ENCODE measurements at regions of chr9 and their contacts with region 1.

Region 1: DNA sequence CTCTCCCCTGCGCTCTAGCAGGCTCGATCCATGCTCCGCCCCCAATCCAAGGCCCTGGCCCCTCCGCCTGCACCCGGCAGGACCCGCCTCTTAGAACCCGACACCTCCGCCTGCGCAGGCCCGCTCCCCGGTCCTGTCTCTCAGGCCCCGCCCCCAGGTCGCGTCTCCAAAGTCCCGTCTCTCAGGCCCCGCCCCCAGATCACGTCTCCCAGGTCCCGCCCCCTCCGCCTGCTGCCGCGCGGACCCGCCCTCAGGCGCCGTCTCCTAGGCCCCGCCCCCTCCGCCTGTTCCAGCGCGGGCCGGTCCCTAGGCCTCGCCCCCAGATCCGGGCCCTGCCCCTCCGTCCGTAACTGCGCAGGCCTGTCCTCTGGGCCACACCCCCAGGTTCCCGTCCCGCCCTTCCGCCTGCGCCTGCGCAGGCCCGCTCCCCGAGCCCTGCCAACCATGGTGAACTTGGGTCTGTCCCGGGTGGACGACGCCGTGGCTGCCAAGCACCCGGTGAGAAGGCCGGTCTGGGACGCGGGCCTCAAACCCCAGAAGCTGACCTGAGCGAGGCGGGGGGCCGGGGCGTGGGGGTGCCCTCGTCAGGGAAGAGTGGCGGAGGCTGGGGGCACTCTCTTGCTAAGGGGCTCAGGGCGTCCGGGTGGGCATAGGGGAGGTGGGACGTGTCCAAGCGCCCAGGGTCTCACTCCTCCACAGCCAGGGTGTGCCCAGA is at the start of gene TMEM141:
- DNase-seq: peak; percentile 99 to 100 (median 99)
- H3K4me3 ChIP-seq: peak within 1 kb of the TSS; percentile 61 to 86
- H3K4me3 Mint-ChIP-seq: peak within 1 kb of the TSS; percentile 81 to 88 (median 85)
- H3K27ac ChIP-seq: peak within 1 kb of the TSS; percentile 93
- H3K27ac Mint-ChIP-seq: peak within 1 kb of the TSS; percentile 91 to 98 (median 95)
- H3K4me1 ChIP-seq: peaks cover 31% of the 10 kb centered on the region
- H3K4me1 Mint-ChIP-seq: peaks cover 8 to 42% (median 24%) of the 10 kb centered on the region in 4 donors
- H3K27me3 ChIP-seq: no peaks in the 10 kb centered on the region
- H3K27me3 Mint-ChIP-seq: no peaks in the 10 kb centered on the region
- total RNA-seq, gene TMEM141: 51.1 to 53.4 TPM

Region 2: DNA sequence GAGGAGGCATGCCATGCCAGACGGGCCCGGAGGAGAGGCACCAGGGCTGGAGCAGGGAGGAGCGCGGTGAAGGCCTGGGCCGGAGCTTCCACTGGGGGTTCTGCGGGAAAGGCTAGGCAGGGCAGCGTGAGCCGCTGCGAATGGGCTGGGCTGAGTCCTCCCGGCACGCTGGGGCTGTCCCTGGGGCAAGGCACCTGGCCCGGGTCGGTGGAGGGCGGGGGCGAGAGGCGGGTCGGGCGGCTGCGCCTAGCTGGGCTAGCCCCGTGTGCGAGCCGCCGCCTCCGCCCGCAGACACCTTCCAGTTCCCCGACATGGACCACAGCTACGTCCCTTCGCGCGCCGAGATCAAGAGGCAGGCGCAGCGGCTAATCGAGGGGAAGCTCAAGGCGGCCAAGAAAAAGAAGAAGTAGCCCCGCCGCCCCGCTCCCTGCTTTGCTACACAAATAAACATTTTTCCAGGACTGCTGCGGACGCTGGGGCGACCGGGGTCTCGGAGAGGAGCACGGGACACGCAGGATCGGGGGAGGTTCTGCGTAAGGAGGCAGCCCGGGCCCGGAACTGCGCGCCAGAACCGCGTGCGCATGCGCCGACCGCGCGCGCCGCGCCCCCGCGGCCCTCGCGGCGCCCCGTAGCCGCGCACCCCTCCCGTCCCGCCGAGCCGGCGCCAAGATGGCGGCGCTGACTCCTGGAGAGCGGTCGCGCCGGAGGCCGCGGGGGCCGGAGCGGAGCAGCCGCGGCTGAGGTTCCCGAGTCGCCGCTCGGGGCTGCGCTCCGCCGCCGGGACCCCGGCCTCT is 16.4 kb after region 1 on chr9 and contains the start of gene RABL6:
- CTCF ChIA-PET with region 1: interaction called, 16 read pairs
- POLR2A ChIA-PET with region 1: interaction called, 38 read pairs
- intact Hi-C with region 1: loop called (anchors 2 kb)
- DNase-seq: peak; percentile 78 to 90 (median 86)
- H3K4me3 ChIP-seq: peak within 1 kb of the TSS; percentile 61 to 74
- H3K4me3 Mint-ChIP-seq: peak within 1 kb of the TSS; percentile 87 to 93 (median 90)
- H3K27ac ChIP-seq: peak within 1 kb of the TSS; percentile 83
- H3K27ac Mint-ChIP-seq: peak within 1 kb of the TSS; percentile 91 to 96 (median 94)
- H3K4me1 ChIP-seq: peaks cover 40% of the 10 kb centered on the region
- H3K4me1 Mint-ChIP-seq: peaks cover 11 to 45% (median 30%) of the 10 kb centered on the region in 4 donors
- H3K27me3 ChIP-seq: no peaks in the 10 kb centered on the region
- H3K27me3 Mint-ChIP-seq: no peaks in the 10 kb centered on the region
- total RNA-seq, gene RABL6: 65.1 to 70.9 TPM

Region 3: GRCh38 chr9:136885950-136886578 is 95.0 kb after region 1 on chr9 and contains the start of gene TRAF2:
- CTCF ChIA-PET with region 1: interaction called, 3 read pairs
- POLR2A ChIA-PET with region 1: interaction called, 6 read pairs
- intact Hi-C with region 1: loop called (anchors 5 kb)
- DNase-seq: peak; percentile 97
- H3K4me3 ChIP-seq: peak within 1 kb of the TSS; percentile 36 to 82
- H3K4me3 Mint-ChIP-seq: peak within 1 kb of the TSS; percentile 84 to 92 (median 88)
- H3K27ac ChIP-seq: peak within 1 kb of the TSS; percentile 98
- H3K27ac Mint-ChIP-seq: peak within 1 kb of the TSS; percentile 92 to 97 (median 94)
- H3K4me1 ChIP-seq: peaks cover 54% of the 10 kb centered on the region
- H3K4me1 Mint-ChIP-seq: peaks cover 16 to 57% (median 32%) of the 10 kb centered on the region in 4 donors
- H3K27me3 ChIP-seq: no peaks in the 10 kb centered on the region
- H3K27me3 Mint-ChIP-seq: no peaks in the 10 kb centered on the region
- total RNA-seq, gene TRAF2: 40.2 to 43.2 TPM

Region 4: DNA sequence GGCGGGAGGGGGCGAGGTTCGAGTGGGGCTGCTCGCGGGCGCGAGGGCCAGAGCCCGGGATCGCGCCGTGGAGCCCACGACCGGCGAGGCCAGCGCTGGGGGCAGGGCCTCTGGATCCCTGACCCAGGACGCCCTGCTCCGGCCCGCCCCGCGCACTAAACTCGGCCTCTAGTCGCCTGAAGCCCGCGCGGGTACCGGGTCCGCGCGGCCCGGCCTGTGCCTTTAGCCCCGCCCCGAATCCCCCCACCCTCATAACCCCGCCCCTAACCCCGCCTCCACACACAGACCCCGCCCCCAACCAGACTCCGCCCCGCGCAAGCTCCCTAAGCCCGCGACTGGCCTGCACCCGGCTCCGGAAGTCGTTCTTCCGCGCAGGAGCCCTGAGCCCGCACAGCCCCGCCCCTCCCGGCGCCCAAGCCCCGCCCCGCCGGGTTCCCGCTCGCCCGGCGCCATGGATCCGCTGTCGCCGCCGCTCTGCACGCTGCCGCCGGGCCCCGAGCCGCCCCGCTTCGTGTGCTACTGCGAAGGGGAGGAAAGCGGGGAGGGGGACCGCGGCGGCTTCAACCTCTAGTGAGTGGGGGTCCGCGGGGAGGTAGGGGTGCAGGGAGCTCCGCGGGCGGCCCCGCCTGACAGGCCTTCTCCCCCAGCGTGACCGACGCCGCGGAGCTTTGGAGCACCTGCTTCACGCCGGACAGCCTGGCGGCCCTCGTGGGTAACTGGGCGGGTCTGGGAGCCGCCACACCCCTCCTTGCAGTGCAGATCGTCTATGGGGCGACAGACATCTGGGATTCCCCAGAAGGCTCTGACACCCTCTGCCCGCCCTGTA is 201.1 kb after region 1 on chr9 and contains the start of gene PAXX:
- CTCF ChIA-PET with region 1: interaction called, 3 read pairs
- POLR2A ChIA-PET with region 1: interaction called, 3 read pairs
- intact Hi-C with region 1: loop called (anchors 1 kb)
- DNase-seq: peak; percentile 92 to 93 (median 93)
- H3K4me3 ChIP-seq: peak within 1 kb of the TSS; percentile 86 to 90
- H3K4me3 Mint-ChIP-seq: peak within 1 kb of the TSS; percentile 84 to 92 (median 88)
- H3K27ac ChIP-seq: peak within 1 kb of the TSS; percentile 85
- H3K27ac Mint-ChIP-seq: peak within 1 kb of the TSS; percentile 83 to 94 (median 88)
- H3K4me1 ChIP-seq: peaks cover 41% of the 10 kb centered on the region
- H3K4me1 Mint-ChIP-seq: peaks cover 4 to 41% (median 20%) of the 10 kb centered on the region in 4 donors
- H3K27me3 ChIP-seq: no peaks in the 10 kb centered on the region
- H3K27me3 Mint-ChIP-seq: peaks cover 0 to 5% of the 10 kb centered on the region in 2 donors
- total RNA-seq, gene PAXX: 94.2 to 101 TPM

Measured in CD4-positive, alpha-beta memory T cell (primary cell).